IMR-90 (cell line): ENCODE measurements at regions of chr6 and their contacts with region 1.

Region 1: GRCh38 chr6:133631421-133631820 is 257.5 kb upstream of the TCF21 start:
- DNase-seq: peak; percentile 73
- ATAC-seq: peak; percentile 87
- H3K4me3 ChIP-seq: no peak overlapping the region
- H3K27ac ChIP-seq: peak overlapping the region; percentile 69
- H3K4me1 ChIP-seq: peaks cover 20% of the 10 kb centered on the region
- H3K27me3 ChIP-seq: no peaks in the 10 kb centered on the region
- CTCF ChIP-seq: peak; percentile 46
- POLR2A ChIP-seq: no peak
- RAD21 ChIP-seq: 0 out of 2 replicates have a peak, but pooled peaks have one; percentile 15

Region 2: GRCh38 chr6:133609404-133610270 is 21.8 kb before region 1 on chr6:
- CTCF ChIA-PET with region 1: interaction called, 3 read pairs
- POLR2A ChIA-PET with region 1: no interaction called
- dilution Hi-C with region 1: no loop called
- in situ Hi-C with region 1: no loop called
- intact Hi-C with region 1: loop called (anchors 2 kb)
- DNase-seq: peak; percentile 100
- ATAC-seq: peak; percentile 81
- H3K4me3 ChIP-seq: no peak overlapping the region
- H3K27ac ChIP-seq: peak overlapping the region; percentile 98; the same call in 1 of the 2 replicates
- H3K4me1 ChIP-seq: peaks cover 30% of the 10 kb centered on the region
- H3K27me3 ChIP-seq: no peaks in the 10 kb centered on the region
- CTCF ChIP-seq: no peak
- POLR2A ChIP-seq: peak; percentile 51; the same call in 1 of the 2 replicates
- RAD21 ChIP-seq: peak; percentile 6

Region 3: DNA sequence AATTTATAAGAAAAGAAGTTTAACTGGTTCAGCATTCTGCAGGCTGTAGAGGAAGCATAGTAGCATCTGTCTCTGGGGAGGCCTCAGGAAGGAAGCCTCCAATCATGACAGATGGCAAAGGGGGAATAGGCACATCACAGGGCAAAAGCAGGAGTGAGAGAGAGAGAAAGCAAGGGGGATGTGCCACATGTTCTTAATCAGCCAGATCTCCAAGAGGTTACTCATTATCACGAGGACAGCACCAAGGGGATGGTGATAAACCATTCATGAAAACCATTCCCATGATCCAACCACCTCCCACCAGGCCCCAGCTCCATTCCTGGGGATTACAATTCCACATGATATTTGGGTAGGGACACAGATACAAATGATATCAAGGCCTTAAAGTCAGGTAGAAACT is 40.0 kb after region 1 on chr6:
- CTCF ChIA-PET with region 1: no interaction called
- POLR2A ChIA-PET with region 1: no interaction called
- dilution Hi-C with region 1: no loop called
- in situ Hi-C with region 1: no loop called
- intact Hi-C with region 1: no loop called
- DNase-seq: no peak
- ATAC-seq: no peak
- H3K4me3 ChIP-seq: no peak overlapping the region
- H3K27ac ChIP-seq: no peak overlapping the region
- H3K4me1 ChIP-seq: peaks cover 5% of the 10 kb centered on the region
- H3K27me3 ChIP-seq: no peaks in the 10 kb centered on the region
- CTCF ChIP-seq: no peak
- POLR2A ChIP-seq: no peak
- RAD21 ChIP-seq: no peak

Region 4: DNA sequence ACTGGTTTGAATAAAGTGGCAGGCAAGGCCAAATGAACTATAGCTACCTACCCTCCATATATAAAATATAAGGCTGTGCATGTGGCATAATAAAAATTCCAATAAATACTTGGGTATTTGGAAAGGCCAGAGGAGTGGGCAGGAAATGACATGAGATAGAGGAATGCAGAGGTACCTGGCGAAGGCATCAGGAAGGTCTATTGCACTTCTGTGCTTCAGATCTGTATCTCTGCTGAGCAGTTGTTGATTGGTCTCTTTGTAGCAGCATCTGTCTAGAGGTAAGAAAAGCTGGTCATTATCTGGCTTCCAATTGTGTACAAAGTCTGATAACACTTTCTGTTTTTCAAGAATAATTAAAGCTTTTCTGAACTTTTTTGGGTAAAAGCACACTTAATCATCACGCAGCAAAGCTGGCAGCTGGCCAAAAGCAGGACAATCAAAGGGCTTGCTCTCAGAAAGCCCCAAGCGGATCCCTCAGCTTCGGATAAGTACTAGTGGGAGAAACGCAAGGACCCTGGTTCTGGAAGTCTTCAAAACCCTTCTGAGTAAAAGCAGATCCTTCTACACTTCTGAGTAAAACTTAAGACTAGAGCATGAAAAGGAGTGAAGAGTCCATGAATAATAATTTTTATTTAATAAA is 137.4 kb after region 1 on chr6:
- CTCF ChIA-PET with region 1: no interaction called
- POLR2A ChIA-PET with region 1: no interaction called
- dilution Hi-C with region 1: no loop called
- in situ Hi-C with region 1: no loop called
- intact Hi-C with region 1: loop called (anchors 5 kb)
- DNase-seq: no peak
- ATAC-seq: no peak
- H3K4me3 ChIP-seq: no peak overlapping the region
- H3K27ac ChIP-seq: no peak overlapping the region
- H3K4me1 ChIP-seq: peaks cover 16% of the 10 kb centered on the region
- H3K27me3 ChIP-seq: no peaks in the 10 kb centered on the region
- CTCF ChIP-seq: no peak
- POLR2A ChIP-seq: no peak
- RAD21 ChIP-seq: no peak

Region 5: DNA sequence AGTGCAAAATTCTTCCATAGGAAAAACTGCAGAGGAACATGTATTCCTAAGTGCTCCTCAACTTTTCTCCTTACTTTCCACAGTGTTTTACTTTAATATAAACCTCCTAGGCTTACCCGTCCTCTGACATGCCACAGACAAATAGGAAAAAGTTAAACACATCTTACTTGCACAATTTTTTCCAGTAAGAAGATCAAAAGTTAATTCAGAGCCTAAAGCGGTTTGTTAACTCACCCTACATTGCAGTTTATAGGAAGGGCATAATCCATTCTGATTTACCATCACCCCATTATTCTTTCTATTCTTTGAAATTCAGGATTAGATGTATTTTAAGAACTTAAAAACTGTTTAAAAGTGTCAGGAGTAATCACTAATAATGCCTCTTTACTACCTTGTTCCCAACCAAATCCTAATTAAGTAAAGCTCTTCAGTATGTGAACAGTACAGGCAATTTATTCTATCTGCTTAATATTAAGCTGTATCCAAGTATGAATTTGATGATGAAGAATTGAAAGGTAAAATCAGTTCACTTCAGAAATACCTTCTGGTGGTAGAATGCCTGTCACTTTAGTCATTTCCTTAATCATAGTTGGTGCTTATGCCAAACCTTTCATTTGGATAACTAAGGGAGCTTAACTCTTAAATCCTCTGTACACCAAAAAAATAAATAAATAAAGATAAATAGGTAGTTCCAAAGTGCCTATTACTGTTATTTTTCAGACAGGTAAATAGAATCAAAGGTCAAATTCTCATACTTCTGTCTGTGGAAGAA is 1026.5 kb after region 1 on chr6:
- CTCF ChIA-PET with region 1: no interaction called
- POLR2A ChIA-PET with region 1: interaction called, 12 read pairs
- dilution Hi-C with region 1: no loop called
- in situ Hi-C with region 1: no loop called
- intact Hi-C with region 1: no loop called
- DNase-seq: peak; percentile 15
- ATAC-seq: peak; percentile 21; the same call in 1 of the 2 replicates
- H3K4me3 ChIP-seq: no peak overlapping the region
- H3K27ac ChIP-seq: peak overlapping the region; percentile 32; the same call in 1 of the 2 replicates
- H3K4me1 ChIP-seq: peaks cover 7% of the 10 kb centered on the region
- H3K27me3 ChIP-seq: no peaks in the 10 kb centered on the region
- CTCF ChIP-seq: no peak
- POLR2A ChIP-seq: no peak
- RAD21 ChIP-seq: no peak